Activated B cell treated with CpG ODN at 0.5 μM for 24 hours (primary cell): ENCODE measurements at regions of chr15 and their contacts with region 1.

Region 1: GRCh38 chr15:31953478-31953877 is 76.8 kb upstream of the CHRNA7 start:
- DNase-seq: no peak
- ATAC-seq: no peak
- H3K4me3 Mint-ChIP-seq: no peak overlapping the region
- H3K27ac Mint-ChIP-seq: no peak overlapping the region
- H3K4me1 Mint-ChIP-seq: no peaks in the 10 kb centered on the region
- H3K27me3 Mint-ChIP-seq: no peaks in the 10 kb centered on the region
- CTCF ChIP-seq: no peak

Region 2: DNA sequence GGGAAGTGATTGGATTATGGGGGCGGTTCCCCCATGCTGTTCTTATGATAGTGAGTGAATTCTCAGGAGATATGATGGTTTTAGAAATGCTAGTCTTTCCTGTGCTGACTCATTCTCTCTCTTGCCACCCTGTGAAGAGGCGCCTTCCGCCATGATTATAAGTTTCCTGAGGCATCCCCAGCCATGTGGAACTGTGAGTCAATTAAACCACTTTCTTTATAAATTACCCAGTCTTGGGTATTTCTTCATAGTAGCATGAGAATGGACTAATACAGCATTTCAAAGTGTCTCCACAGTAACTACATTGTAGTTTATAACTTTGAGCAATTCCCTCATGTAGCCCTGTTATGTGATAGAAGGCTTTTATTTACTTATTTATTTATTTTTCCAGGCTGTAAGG is 52.0 kb before region 1 on chr15:
- CTCF ChIA-PET with region 1: no interaction called
- POLR2A ChIA-PET with region 1: no interaction called
- intact Hi-C with region 1: loop called (anchors 2 kb)
- DNase-seq: no peak
- ATAC-seq: no peak
- H3K4me3 Mint-ChIP-seq: no peak overlapping the region
- H3K27ac Mint-ChIP-seq: no peak overlapping the region
- H3K4me1 Mint-ChIP-seq: no peaks in the 10 kb centered on the region
- H3K27me3 Mint-ChIP-seq: peaks cover under 1% of the 10 kb centered on the region
- CTCF ChIP-seq: no peak

Region 3: DNA sequence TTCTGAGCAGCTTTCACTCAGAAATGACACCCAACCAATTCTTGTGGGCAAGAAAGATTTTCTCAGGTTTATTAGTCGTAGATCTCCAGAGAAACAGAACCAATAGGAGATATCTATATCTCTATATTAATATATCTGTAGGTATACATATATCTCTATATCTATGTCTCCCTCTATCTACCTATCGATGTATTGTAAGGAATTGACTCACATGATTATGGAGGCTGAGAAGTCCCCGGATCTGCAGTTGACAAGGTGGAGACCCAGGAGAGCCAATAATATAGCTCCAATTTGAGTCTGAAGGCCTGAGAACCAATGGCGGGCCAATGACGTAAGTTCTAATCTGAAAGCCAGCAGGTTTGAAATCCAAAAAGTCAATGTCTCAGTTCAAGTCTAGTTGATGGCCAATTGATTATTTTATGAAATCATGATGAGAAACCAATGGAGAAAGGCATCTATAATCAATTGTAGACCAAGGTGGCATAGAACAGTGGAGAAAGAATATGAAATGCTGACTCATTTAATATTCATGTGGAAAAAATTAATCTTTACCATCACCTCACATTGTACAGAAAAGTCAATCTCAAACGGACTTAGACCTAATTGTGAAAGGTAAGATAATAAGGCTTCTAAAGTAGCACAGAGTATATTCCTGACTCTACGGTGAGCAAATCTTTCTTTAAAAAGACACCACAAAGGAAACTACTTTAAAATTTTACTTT is 11.3 kb after region 1 on chr15:
- CTCF ChIA-PET with region 1: no interaction called
- POLR2A ChIA-PET with region 1: no interaction called
- intact Hi-C with region 1: no loop called
- DNase-seq: no peak
- ATAC-seq: no peak
- H3K4me3 Mint-ChIP-seq: no peak overlapping the region
- H3K27ac Mint-ChIP-seq: no peak overlapping the region
- H3K4me1 Mint-ChIP-seq: no peaks in the 10 kb centered on the region
- H3K27me3 Mint-ChIP-seq: peaks cover 2% of the 10 kb centered on the region
- CTCF ChIP-seq: no peak